ENCODE measurements at regions of chr5 and their contacts with region 1.

Region 1: GRCh38 chr5:139517683-139518564 is 35.4 kb upstream of the STING1 start:
- DNase-seq: peak; percentile 91
- H3K4me3 Mint-ChIP-seq: peak overlapping the region; percentile 81
- H3K27ac Mint-ChIP-seq: peak overlapping the region; percentile 87
- H3K4me1 Mint-ChIP-seq: peaks cover 16% of the 10 kb centered on the region
- H3K27me3 Mint-ChIP-seq: no peaks in the 10 kb centered on the region
- CTCF ChIP-seq: peak; percentile 99

Region 2: GRCh38 chr5:139382381-139383180 is 135.3 kb before region 1 on chr5:
- CTCF ChIA-PET with region 1: no interaction called
- POLR2A ChIA-PET with region 1: no interaction called
- intact Hi-C with region 1: no loop called
- DNase-seq: no peak
- H3K4me3 Mint-ChIP-seq: no peak overlapping the region
- H3K27ac Mint-ChIP-seq: no peak overlapping the region
- H3K4me1 Mint-ChIP-seq: peaks cover 20% of the 10 kb centered on the region
- H3K27me3 Mint-ChIP-seq: no peaks in the 10 kb centered on the region
- CTCF ChIP-seq: no peak

Region 3: GRCh38 chr5:139392678-139393496 is 125.0 kb before region 1 on chr5:
- CTCF ChIA-PET with region 1: no interaction called
- POLR2A ChIA-PET with region 1: no interaction called
- intact Hi-C with region 1: no loop called
- DNase-seq: peak; percentile 63
- H3K4me3 Mint-ChIP-seq: peak overlapping the region; percentile 67
- H3K27ac Mint-ChIP-seq: no peak overlapping the region
- H3K4me1 Mint-ChIP-seq: peaks cover 16% of the 10 kb centered on the region
- H3K27me3 Mint-ChIP-seq: no peaks in the 10 kb centered on the region
- CTCF ChIP-seq: peak; percentile 35

Region 4: GRCh38 chr5:139403787-139404483 is 114.0 kb before region 1 on chr5 and contains the start of gene SPATA24:
- CTCF ChIA-PET with region 1: interaction called, 13 read pairs
- POLR2A ChIA-PET with region 1: interaction called, 3 read pairs
- intact Hi-C with region 1: no loop called
- DNase-seq: peak; percentile 99
- H3K4me3 Mint-ChIP-seq: peak within 1 kb of the TSS; percentile 97
- H3K27ac Mint-ChIP-seq: peak within 1 kb of the TSS; percentile 99
- H3K4me1 Mint-ChIP-seq: peaks cover 23% of the 10 kb centered on the region
- H3K27me3 Mint-ChIP-seq: no peaks in the 10 kb centered on the region
- CTCF ChIP-seq: no peak
- total RNA-seq, gene SPATA24: 9.8 and 11.6 TPM in 2 replicates

Region 5: DNA sequence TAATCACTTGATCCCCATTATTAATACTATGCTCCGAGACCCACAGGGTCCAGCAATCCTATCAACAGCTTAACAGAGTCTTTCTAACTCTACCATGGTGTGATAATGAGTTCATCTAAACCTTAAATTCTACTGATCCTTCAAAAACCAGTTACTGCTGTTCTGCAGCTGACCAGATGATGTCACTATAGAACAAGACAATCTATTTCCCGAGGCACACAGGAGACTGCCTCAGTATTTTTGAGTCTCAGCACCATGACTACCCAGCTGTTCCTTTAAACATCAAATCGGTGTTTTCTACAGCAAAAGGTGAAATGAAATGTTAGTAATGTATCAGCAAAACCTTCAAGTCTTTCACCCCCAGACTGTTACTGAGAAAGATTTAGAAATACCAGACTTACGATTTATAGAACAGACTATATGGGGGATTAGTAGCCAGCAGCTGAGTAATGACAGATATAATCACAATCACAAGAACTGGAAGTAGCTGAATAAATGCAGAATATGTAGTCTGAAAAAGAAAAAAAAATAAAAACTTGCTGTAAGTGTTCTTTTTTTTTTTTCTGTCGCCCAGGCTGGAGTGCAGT is 95.5 kb before region 1 on chr5:
- CTCF ChIA-PET with region 1: interaction called, 434 read pairs
- POLR2A ChIA-PET with region 1: interaction called, 13 read pairs
- intact Hi-C with region 1: loop called (anchors 1 kb)
- DNase-seq: peak; percentile 84
- H3K4me3 Mint-ChIP-seq: no peak overlapping the region
- H3K27ac Mint-ChIP-seq: peak overlapping the region; percentile 57
- H3K4me1 Mint-ChIP-seq: no peaks in the 10 kb centered on the region
- H3K27me3 Mint-ChIP-seq: no peaks in the 10 kb centered on the region
- CTCF ChIP-seq: peak; percentile 93

Region 6: GRCh38 chr5:139439013-139439903 is 78.7 kb before region 1 on chr5 and contains the start of gene DNAJC18:
- CTCF ChIA-PET with region 1: interaction called, 55 read pairs
- POLR2A ChIA-PET with region 1: interaction called, 4 read pairs
- intact Hi-C with region 1: no loop called
- DNase-seq: peak; percentile 92
- H3K4me3 Mint-ChIP-seq: peak within 1 kb of the TSS; percentile 89
- H3K27ac Mint-ChIP-seq: peak within 1 kb of the TSS; percentile 96
- H3K4me1 Mint-ChIP-seq: peaks cover 11% of the 10 kb centered on the region
- H3K27me3 Mint-ChIP-seq: no peaks in the 10 kb centered on the region
- CTCF ChIP-seq: no peak
- total RNA-seq, gene DNAJC18: 14.1 and 15.1 TPM in 2 replicates

Region 7: GRCh38 chr5:139482050-139482889 is 35.7 kb before region 1 on chr5 and contains the start of gene STING1:
- CTCF ChIA-PET with region 1: interaction called, 27 read pairs
- POLR2A ChIA-PET with region 1: interaction called, 3 read pairs
- intact Hi-C with region 1: loop called (anchors 2 kb)
- DNase-seq: peak; percentile 100
- H3K4me3 Mint-ChIP-seq: peak within 1 kb of the TSS; percentile 77
- H3K27ac Mint-ChIP-seq: peak within 1 kb of the TSS; percentile 92
- H3K4me1 Mint-ChIP-seq: peaks cover 24% of the 10 kb centered on the region
- H3K27me3 Mint-ChIP-seq: no peaks in the 10 kb centered on the region
- CTCF ChIP-seq: peak; percentile 1
- total RNA-seq, gene STING1: 33.1 and 35.1 TPM in 2 replicates

Region 8: GRCh38 chr5:139560752-139561654 is 43.1 kb after region 1 on chr5 and contains the start of gene UBE2D2:
- CTCF ChIA-PET with region 1: interaction called, 7 read pairs
- POLR2A ChIA-PET with region 1: interaction called, 13 read pairs
- intact Hi-C with region 1: loop called (anchors 2 kb)
- DNase-seq: peak; percentile 98
- H3K4me3 Mint-ChIP-seq: peak within 1 kb of the TSS; percentile 85
- H3K27ac Mint-ChIP-seq: peak within 1 kb of the TSS; percentile 88
- H3K4me1 Mint-ChIP-seq: peaks cover 12% of the 10 kb centered on the region
- H3K27me3 Mint-ChIP-seq: no peaks in the 10 kb centered on the region
- CTCF ChIP-seq: no peak
- total RNA-seq, gene UBE2D2: 306 and 329 TPM in 2 replicates

Region 9: DNA sequence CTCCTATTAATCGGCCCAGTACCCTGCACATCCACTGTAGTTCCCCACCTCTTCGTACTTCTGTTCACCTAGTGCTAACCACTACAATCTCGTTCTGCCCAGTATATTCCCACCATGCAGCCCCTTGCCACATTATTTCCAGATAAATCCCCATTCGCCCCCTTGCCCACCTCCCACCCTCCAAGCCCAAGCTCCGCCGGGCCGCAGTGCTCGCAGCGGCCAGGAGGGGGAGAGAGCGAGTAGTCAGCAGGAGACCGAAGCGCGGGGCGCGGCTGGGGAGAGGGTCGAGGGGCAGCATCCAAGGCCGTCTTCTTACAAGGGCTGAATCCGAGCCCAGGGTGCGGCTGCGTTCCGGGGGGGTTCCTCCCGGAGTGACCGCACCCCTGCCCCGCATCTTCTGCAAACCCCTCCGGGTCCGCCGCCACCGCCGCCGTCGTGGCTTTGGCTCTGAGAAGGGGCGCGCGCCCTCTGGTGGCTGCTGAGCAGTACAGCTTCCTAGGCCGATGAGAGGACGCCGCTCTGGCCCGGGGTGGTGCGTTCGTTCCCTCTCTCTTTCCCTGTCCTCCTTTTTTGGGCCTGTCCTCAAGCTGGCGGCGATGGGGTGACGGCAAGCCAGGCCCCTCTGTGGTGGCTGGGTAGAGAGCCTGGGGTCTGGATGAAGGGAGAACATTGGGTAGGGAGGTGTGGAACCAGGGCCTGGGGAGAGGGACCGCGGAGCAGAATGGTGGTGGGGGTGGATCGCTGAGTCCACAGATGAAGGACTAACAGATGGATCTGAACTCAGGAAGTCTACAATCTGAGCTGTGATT is 247.7 kb after region 1 on chr5:
- CTCF ChIA-PET with region 1: interaction called, 6 read pairs
- POLR2A ChIA-PET with region 1: interaction called, 4 read pairs
- intact Hi-C with region 1: loop called (anchors 5 kb)
- DNase-seq: peak; percentile 85
- H3K4me3 Mint-ChIP-seq: peak overlapping the region; percentile 54
- H3K27ac Mint-ChIP-seq: no peak overlapping the region
- H3K4me1 Mint-ChIP-seq: peaks cover 13% of the 10 kb centered on the region
- H3K27me3 Mint-ChIP-seq: no peaks in the 10 kb centered on the region
- CTCF ChIP-seq: peak; percentile 98